PC-9 (cell line): ENCODE measurements at regions of chr15 and their contacts with region 1.

Region 1: DNA sequence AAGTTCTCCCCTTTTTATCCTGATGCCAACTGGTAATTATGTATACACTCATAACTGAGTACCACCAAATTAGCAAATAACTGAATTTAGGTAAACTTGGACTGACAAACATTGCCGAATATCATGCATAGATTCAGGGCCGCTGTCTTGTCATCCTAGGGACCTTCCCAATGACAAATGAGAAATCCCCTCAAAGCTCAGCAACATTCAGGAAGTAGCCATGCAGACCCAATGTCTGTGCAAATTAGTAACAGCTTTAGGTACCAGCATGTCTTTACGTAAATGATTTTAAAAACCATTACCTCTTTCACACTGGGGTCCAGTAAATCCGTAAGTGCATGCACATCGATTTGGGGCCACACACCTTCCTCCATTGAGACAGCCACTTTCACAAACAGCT is 49.5 kb downstream of the FBN1 start:
- DNase-seq: no peak
- H3K4me3 ChIP-seq: no peak overlapping the region
- H3K27ac ChIP-seq: no peak overlapping the region
- H3K4me1 ChIP-seq: no peaks in the 10 kb centered on the region
- H3K27me3 ChIP-seq: no peaks in the 10 kb centered on the region
- CTCF ChIP-seq: no peak

Region 2: DNA sequence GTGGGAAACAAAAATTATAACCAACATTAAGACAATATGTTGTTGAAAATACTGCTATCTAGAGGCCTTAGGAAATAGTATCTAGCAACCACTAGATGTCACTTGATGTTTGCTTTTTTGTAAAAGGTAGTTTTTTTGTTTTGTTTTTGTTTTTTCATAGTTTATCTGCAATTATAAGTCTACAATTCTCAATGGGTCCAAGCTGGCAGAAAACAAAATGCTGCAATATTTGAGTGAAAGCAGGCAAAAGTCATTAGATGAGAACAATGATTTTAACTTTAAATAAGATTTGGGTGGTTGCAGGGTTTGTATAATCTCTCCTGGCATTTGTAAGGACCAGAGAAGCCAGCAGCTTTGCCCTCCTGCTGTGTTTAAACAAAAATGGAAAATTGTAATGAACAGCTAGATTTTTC is 237.7 kb before region 1 on chr15:
- CTCF ChIA-PET with region 1: no interaction called
- POLR2A ChIA-PET with region 1: interaction called, 10 read pairs
- intact Hi-C with region 1: no loop called
- DNase-seq: no peak
- H3K4me3 ChIP-seq: no peak overlapping the region
- H3K27ac ChIP-seq: no peak overlapping the region
- H3K4me1 ChIP-seq: no peaks in the 10 kb centered on the region
- H3K27me3 ChIP-seq: no peaks in the 10 kb centered on the region
- CTCF ChIP-seq: peak; percentile 70

Region 3: DNA sequence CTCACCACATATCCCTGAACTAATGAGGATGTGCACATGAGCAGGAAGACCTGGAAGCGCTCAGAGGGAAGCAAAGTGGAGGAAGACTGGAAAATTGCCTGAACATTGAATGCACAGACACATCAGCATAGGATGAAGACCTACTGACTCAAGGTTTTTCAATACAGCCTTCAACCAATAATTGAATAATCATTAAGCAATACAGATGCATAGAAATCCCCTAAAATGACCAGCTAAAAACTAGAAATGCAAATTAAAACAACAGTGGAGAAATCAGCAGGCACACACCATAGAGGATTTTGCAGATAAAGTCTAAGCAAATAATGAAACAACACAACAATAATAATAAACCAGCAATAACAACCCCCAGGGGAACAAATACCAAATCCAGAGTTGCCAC is 134.5 kb after region 1 on chr15:
- CTCF ChIA-PET with region 1: no interaction called
- POLR2A ChIA-PET with region 1: no interaction called
- intact Hi-C with region 1: no loop called
- DNase-seq: no peak
- H3K4me3 ChIP-seq: no peak overlapping the region
- H3K27ac ChIP-seq: no peak overlapping the region
- H3K4me1 ChIP-seq: no peaks in the 10 kb centered on the region
- H3K27me3 ChIP-seq: no peaks in the 10 kb centered on the region
- CTCF ChIP-seq: no peak